ENCODE measurements at regions of chr11 and their contacts with region 1.

Region 1: DNA sequence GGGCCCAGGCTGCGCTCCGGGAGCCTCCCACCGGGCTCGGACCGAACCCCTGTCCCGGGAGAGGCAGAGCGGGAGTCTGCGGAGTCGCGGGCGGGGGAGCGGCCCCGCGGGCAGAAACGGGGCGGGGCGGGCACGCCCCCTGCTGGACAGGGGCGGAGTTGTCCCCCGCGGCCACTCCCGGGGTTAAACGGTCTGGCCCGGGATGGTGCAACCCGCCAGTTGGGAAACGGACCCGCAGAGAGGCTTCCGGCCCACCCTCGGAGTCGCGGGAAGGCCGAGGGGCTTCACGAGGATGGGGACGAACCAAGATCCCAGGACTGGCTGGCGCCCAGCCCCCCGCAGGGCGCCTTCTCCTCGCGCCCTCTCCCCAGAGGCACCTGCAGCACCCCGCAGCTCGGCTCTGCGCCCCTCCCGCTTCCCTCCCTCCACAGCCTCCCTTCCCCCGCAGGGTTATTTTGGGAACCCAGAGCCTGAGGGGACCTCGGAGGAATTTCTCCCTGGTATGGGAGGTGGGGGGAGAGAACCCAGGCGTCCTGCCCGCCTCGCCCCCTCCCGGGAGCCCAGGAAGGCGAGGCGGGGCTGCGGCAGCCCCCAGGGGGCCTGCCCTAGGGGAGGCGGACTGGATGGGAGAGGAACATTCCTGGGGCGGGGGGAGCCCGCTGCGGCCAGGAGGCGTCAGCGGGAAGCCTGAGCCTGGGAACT is 902 bp downstream of the RASGRP2 start:
- DNase-seq: peak; percentile 95
- H3K4me3 Mint-ChIP-seq: peak overlapping the region; percentile 94
- H3K27ac Mint-ChIP-seq: no peak overlapping the region
- H3K4me1 Mint-ChIP-seq: peaks cover 30% of the 10 kb centered on the region
- H3K27me3 Mint-ChIP-seq: no peaks in the 10 kb centered on the region

Region 2: GRCh38 chr11:64688534-64688982 is 54.5 kb before region 1 on chr11:
- intact Hi-C with region 1: loop called (anchors 1 kb)
- DNase-seq: peak; percentile 97
- H3K4me3 Mint-ChIP-seq: peak overlapping the region; percentile 51
- H3K27ac Mint-ChIP-seq: no peak overlapping the region
- H3K4me1 Mint-ChIP-seq: peaks cover 16% of the 10 kb centered on the region
- H3K27me3 Mint-ChIP-seq: peaks cover 31% of the 10 kb centered on the region

Region 3: GRCh38 chr11:64723117-64723906 is 19.7 kb before region 1 on chr11 and contains the start of gene NRXN2:
- intact Hi-C with region 1: loop called (anchors 1 kb)
- DNase-seq: peak; percentile 97
- H3K4me3 Mint-ChIP-seq: peak within 1 kb of the TSS; percentile 72
- H3K27ac Mint-ChIP-seq: peak within 1 kb of the TSS; percentile 41
- H3K4me1 Mint-ChIP-seq: peaks cover 14% of the 10 kb centered on the region
- H3K27me3 Mint-ChIP-seq: peaks cover 36% of the 10 kb centered on the region
- total RNA-seq, gene NRXN2: 0.61 TPM in 1 of 2 replicates, not detected in the other

Region 4: GRCh38 chr11:64767344-64768299 is 24.6 kb after region 1 on chr11:
- intact Hi-C with region 1: loop called (anchors 1 kb)
- DNase-seq: peak; percentile 95
- H3K4me3 Mint-ChIP-seq: peak overlapping the region; percentile 41
- H3K27ac Mint-ChIP-seq: peak overlapping the region; percentile 74
- H3K4me1 Mint-ChIP-seq: peaks cover 70% of the 10 kb centered on the region
- H3K27me3 Mint-ChIP-seq: no peaks in the 10 kb centered on the region

Region 5: GRCh38 chr11:64810271-64810890 is 67.3 kb after region 1 on chr11 and contains the start of gene MEN1:
- intact Hi-C with region 1: loop called (anchors 2 kb)
- DNase-seq: peak; percentile 94
- H3K4me3 Mint-ChIP-seq: peak within 1 kb of the TSS; percentile 98
- H3K27ac Mint-ChIP-seq: peak within 1 kb of the TSS; percentile 95
- H3K4me1 Mint-ChIP-seq: peaks cover 18% of the 10 kb centered on the region
- H3K27me3 Mint-ChIP-seq: no peaks in the 10 kb centered on the region
- total RNA-seq, gene MEN1: 36.7 and 39.1 TPM in 2 replicates

Measured in activated CD4-positive, alpha-beta T cell treated with anti-CD3 and anti-CD28 coated beads, Interleukin-2, amount 10 ng/mL, durations not matched to agents 24 days and 14 days (primary cell).